GM23248 (cell line): ENCODE measurements at regions of chr20 and their contacts with region 1.

Region 1: GRCh38 chr20:24337069-24337468 is 132.4 kb upstream of the SYNDIG1 start:
- DNase-seq: peak; percentile 27
- H3K4me3 ChIP-seq: no peak overlapping the region
- H3K27ac ChIP-seq: no peak overlapping the region
- H3K4me1 ChIP-seq: no peaks in the 10 kb centered on the region
- H3K27me3 ChIP-seq: no peaks in the 10 kb centered on the region

Region 2: DNA sequence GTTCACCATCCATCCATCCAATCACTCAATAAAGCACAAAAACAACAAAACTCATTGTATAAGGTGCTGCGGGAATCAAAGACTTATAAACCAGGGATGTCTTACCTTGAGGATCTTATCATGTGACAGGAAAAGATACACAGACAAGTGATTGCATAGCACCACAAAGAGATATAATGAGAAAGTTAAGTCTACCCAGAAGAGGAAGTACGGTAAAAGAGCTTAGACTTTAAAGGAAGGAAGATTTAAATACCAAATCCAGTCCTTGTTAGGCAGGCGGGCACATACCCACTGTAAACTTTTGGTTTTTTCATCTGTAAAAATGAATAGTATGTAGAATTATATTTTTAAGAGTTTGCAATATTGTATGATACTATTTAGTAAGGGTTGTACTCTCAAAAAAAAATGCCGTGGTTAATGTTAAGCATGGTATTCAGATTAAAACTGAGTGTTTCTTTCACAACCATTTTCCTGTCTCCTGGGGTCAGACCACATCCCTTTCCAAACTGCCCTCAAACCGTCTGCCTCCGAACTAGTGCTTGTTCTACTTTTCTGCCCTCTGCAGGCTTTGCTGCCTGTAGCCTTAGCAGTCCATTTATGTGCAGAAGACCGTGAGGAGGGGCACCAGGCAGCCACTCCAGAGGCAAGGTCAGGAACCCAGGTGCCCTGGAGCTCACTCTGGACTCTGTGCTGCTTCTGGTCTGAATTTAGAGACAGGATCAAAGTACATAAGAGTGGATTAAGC is 47.2 kb before region 1 on chr20:
- in situ Hi-C with region 1: loop called (anchors 5 kb)
- DNase-seq: no peak
- H3K4me3 ChIP-seq: no peak overlapping the region
- H3K27ac ChIP-seq: no peak overlapping the region
- H3K4me1 ChIP-seq: no peaks in the 10 kb centered on the region
- H3K27me3 ChIP-seq: no peaks in the 10 kb centered on the region